ENCODE measurements at regions of chr7 and their contacts with region 1.

Region 1: DNA sequence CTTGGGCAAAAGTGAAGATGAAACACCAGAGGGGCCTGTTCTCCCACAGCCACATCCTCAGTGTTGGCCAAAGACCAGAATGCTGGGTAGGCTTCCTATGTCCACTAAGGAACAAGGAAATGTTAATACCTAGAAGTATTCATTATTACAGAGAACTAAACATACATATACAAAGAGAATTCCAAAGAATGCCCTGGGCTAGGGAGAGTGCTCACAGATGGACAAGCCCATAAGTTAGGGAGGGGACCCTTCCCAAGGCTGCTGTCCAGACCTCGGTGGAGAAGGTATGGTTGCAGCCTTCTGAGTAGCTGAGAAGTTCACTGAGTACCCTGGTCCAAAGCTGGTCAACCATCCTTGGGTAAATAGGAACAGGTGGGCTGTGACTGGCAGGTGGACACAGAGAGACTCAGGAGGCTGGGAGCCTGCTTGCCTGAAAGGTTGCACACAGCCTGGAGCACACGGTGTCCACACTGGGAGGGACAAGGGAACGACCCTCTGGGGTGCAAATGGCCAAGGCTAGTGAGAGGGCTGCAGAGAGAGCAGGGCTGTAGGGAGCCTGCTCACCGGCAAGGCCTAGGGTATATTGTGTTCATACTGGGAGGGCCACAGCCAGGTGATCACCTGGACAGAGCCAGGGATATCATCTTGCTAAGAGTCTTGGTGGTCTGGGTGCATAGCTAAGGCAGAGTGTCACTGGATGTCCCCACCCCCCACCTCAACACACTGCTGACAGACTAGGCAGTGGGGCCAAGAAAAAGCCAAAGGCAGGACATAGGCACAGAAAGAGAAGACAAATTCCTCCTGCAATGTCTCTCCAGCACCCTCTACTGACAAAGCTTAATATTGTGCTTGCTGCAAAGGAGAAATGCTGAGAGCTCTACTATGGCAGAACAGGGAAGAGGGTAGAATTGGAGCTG is 40.3 kb downstream of the CPVL start:
- DNase-seq: peak in 1 of 2 donors; percentile 24
- ATAC-seq: peak; percentile 80 to 87
- H3K4me3 ChIP-seq: no peak overlapping the region
- H3K27ac ChIP-seq: no peak overlapping the region
- H3K4me1 ChIP-seq: peaks cover 2 to 4% of the 10 kb centered on the region in 2 donors
- H3K27me3 ChIP-seq: no peaks in the 10 kb centered on the region
- CTCF ChIP-seq: peak; percentile 54 to 84 (median 68)
- POLR2A ChIP-seq: no peak

Region 2: GRCh38 chr7:28921822-28922221 is 184.2 kb before region 1 on chr7:
- in situ Hi-C with region 1: loop called (anchors 5 kb)
- intact Hi-C with region 1: loop called (anchors 1 kb)
- DNase-seq: peak in 1 of 2 donors; percentile 29
- ATAC-seq: peak; percentile 96 to 97
- H3K4me3 ChIP-seq: no peak overlapping the region
- H3K27ac ChIP-seq: no peak overlapping the region
- H3K4me1 ChIP-seq: peaks cover 0 to 4% of the 10 kb centered on the region in 2 donors
- H3K27me3 ChIP-seq: peaks cover 0 to 7% (median 0%) of the 10 kb centered on the region in 3 donors
- CTCF ChIP-seq: peak; percentile 70 to 92 (median 76)
- POLR2A ChIP-seq: no peak

Region 3: DNA sequence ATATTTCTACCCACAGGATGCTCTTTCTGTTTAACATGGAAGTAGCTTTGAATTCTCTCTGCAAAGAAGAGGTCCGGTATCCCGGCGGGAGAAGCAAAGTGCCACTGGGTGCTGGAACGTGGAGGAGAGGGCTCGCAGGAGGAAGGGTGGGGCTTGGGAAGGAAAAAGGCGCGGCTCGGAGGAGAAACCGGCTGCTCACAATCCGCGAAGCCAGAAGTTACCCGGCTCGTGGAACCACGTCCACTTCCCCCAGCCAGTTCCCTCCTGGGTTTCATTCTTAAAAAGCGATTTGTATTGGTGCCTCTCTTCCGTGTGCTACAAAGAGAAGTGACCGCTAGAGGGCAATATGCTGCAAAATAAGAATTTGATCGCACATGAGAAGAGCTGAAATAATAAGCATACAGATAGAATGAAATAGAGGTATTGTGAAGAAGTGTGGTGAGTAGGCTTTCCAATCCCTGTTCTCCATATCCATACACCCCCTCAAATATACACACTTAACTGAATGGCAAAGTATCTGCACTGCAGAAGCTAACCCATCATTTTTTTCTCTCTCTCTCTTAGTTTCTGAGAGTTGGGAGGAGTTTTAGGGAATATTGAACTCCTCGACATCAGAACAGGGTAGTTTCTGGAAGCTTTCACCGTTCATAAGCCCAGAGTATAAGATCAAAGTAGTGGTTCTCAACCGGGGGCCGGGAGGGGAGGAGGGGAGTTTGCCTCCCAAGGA is 179.0 kb before region 1 on chr7:
- in situ Hi-C with region 1: loop called (anchors 5 kb)
- intact Hi-C with region 1: loop called (anchors 1 kb)
- DNase-seq: peak; percentile 43 to 47
- ATAC-seq: peak; percentile 82 to 91
- H3K4me3 ChIP-seq: peak overlapping the region; percentile 47 to 67 (median 55)
- H3K27ac ChIP-seq: peak overlapping the region in 3 of 4 donors; percentile 17 to 56 (median 44)
- H3K4me1 ChIP-seq: peaks cover 0 to 8% of the 10 kb centered on the region in 2 donors
- H3K27me3 ChIP-seq: peaks cover 0 to 8% (median 0%) of the 10 kb centered on the region in 3 donors
- CTCF ChIP-seq: peak; percentile 68 to 84 (median 70)
- POLR2A ChIP-seq: no peak